IMR-90 (cell line): ENCODE measurements at regions of chr10 and their contacts with region 1.

Region 1: DNA sequence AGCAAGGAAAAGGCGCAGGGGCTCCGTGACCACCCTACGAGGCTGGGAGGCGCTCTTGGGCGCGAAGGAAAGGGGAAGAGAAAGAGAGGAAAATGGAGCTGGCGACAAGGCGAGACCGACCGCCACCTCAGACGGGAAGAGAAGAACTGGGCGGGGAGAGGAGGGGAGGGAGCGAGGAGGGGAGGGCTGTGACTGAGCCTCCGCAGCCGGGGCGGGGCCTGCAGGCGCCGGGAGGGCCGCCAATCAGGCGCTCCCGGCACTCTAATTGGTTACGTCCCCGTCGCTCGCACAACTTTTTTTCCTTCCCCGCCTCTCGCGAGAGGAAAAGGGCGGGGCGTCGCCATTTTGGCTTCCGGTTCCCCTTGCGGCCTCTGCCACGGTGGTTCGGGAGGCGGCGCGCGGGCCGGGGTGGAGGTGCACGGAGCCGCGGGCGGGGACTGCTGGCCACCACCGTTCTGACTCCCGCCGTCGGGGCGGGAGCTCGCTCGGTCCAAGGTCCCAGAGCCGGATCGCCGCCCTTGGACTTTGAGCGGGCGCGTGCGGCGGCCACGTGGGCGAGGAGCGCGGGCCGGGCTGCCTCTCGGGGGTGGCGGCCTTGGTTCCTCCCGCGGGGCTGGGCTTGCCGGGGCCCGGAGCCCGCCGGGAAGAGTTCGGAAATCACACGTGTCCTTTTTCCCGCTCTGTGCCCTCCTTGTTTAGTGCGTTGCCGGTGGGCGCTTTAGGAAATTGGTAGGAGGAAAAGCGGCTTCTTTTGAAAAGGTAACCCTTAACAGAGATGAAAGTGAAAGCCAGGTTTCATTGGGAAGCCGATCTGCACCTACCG is at the start of gene GDI2:
- DNase-seq: peak; percentile 95
- ATAC-seq: peak; percentile 97
- H3K4me3 ChIP-seq: peak within 1 kb of the TSS; percentile 81
- H3K27ac ChIP-seq: peak within 1 kb of the TSS; percentile 99
- H3K4me1 ChIP-seq: peaks cover 5% of the 10 kb centered on the region
- H3K27me3 ChIP-seq: no peaks in the 10 kb centered on the region
- CTCF ChIP-seq: no peak
- POLR2A ChIP-seq: peak; percentile 96
- RAD21 ChIP-seq: no peak
- total RNA-seq, gene GDI2: 396 and 608 TPM in 2 replicates

Region 2: GRCh38 chr10:6136215-6137201 is 323.0 kb after region 1 on chr10:
- CTCF ChIA-PET with region 1: no interaction called
- POLR2A ChIA-PET with region 1: interaction called, 12 read pairs
- dilution Hi-C with region 1: no loop called
- in situ Hi-C with region 1: no loop called
- intact Hi-C with region 1: no loop called
- DNase-seq: peak; percentile 86
- ATAC-seq: peak; percentile 75
- H3K4me3 ChIP-seq: no peak overlapping the region
- H3K27ac ChIP-seq: peak overlapping the region; percentile 10; the same call in 1 of the 2 replicates
- H3K4me1 ChIP-seq: peaks cover 16% of the 10 kb centered on the region
- H3K27me3 ChIP-seq: no peaks in the 10 kb centered on the region
- CTCF ChIP-seq: 0 out of 2 replicates have a peak, but pooled peaks have one; percentile 2
- POLR2A ChIP-seq: peak; percentile 42; the same call in 1 of the 2 replicates
- RAD21 ChIP-seq: no peak